K562 (cell line): ENCODE measurements at regions of chr1 and their contacts with region 1.

Region 1: GRCh38 chr1:13807213-13807612 is 107.2 kb downstream of the PRDM2 start:
- DNase-seq: peak; percentile 57 to 70 (median 62)
- ATAC-seq: peak; percentile 72
- H3K4me3 ChIP-seq: no peak overlapping the region
- H3K27ac ChIP-seq: no peak overlapping the region
- H3K4me1 ChIP-seq: peaks cover 23 to 25% of the 10 kb centered on the region in 2 experiments
- H3K27me3 ChIP-seq: peaks cover 6 to 41% of the 10 kb centered on the region in 2 experiments; a peak in 4 of 5 replicates
- CTCF ChIP-seq: peak; percentile 62 to 83 (median 73)
- EP300 ChIP-seq: no peak
- POLR2A ChIP-seq: no peak
- RAD21 ChIP-seq: peak in 1 of 2 experiments; percentile 33; a peak in 2 of 4 replicates

Region 2: DNA sequence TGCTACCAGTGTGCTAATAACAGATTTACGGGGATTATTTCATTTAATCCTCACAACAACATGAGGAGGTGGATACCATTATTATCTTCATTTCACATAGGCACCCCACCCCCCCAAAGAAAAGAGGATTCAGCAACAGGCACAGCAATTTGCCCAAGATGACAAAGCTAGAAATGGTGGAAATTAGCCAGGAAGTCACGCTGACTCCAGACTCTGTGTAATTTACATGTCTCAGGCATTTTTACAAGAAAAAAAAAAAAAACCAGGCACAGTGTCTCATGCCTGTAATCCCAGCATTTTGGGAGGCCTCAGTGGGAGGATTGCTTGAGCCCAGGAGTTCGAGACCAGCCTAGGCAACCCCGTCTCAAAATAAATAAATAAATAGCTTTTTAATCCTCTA is 144.7 kb before region 1 on chr1:
- CTCF ChIA-PET with region 1: interaction called, 16 read pairs
- POLR2A ChIA-PET with region 1: no interaction called
- in situ Hi-C with region 1: no loop called
- intact Hi-C with region 1: loop called (anchors 2 kb)
- DNase-seq: no peak
- ATAC-seq: no peak
- H3K4me3 ChIP-seq: no peak overlapping the region
- H3K27ac ChIP-seq: no peak overlapping the region
- H3K4me1 ChIP-seq: no peaks in the 10 kb centered on the region
- H3K27me3 ChIP-seq: peaks cover 10 to 15% of the 10 kb centered on the region in 2 experiments; a peak in 4 of 5 replicates
- CTCF ChIP-seq: no peak
- EP300 ChIP-seq: no peak
- POLR2A ChIP-seq: no peak
- RAD21 ChIP-seq: no peak

Region 3: GRCh38 chr1:13794231-13795187 is 12.7 kb before region 1 on chr1:
- CTCF ChIA-PET with region 1: no interaction called
- POLR2A ChIA-PET with region 1: interaction called, 11 read pairs
- in situ Hi-C with region 1: no loop called
- intact Hi-C with region 1: no loop called
- DNase-seq: no peak
- ATAC-seq: no peak
- H3K4me3 ChIP-seq: no peak overlapping the region
- H3K27ac ChIP-seq: no peak overlapping the region
- H3K4me1 ChIP-seq: no peaks in the 10 kb centered on the region
- H3K27me3 ChIP-seq: no peaks in the 10 kb centered on the region
- CTCF ChIP-seq: no peak
- EP300 ChIP-seq: no peak
- POLR2A ChIP-seq: no peak
- RAD21 ChIP-seq: no peak

Region 4: DNA sequence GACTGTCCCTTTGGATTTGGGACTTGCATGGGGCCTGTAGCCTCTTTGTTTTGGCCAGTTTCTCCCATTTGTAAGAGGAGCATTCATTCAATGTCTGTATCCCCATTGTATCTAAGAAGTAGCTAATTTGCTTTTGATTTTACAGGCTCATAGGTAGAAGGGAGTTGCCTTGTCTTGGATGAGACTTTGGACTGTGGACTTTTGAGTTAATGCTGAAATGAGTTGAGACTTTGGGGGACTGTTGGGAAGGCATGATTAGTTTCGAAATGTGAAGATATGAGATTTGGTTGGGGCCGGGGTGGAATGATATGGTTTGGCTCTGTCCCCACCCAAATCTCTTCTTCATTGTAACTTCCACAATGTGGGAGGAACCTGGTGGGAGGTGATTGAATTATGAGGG is 44.5 kb after region 1 on chr1:
- CTCF ChIA-PET with region 1: no interaction called
- POLR2A ChIA-PET with region 1: no interaction called
- in situ Hi-C with region 1: no loop called
- intact Hi-C with region 1: no loop called
- DNase-seq: no peak
- ATAC-seq: no peak
- H3K4me3 ChIP-seq: no peak overlapping the region
- H3K27ac ChIP-seq: no peak overlapping the region
- H3K4me1 ChIP-seq: no peaks in the 10 kb centered on the region
- H3K27me3 ChIP-seq: no peaks in the 10 kb centered on the region
- CTCF ChIP-seq: no peak
- EP300 ChIP-seq: no peak
- POLR2A ChIP-seq: no peak
- RAD21 ChIP-seq: no peak